ENCODE measurements at regions of chr4 and their contacts with region 1.

Region 1: DNA sequence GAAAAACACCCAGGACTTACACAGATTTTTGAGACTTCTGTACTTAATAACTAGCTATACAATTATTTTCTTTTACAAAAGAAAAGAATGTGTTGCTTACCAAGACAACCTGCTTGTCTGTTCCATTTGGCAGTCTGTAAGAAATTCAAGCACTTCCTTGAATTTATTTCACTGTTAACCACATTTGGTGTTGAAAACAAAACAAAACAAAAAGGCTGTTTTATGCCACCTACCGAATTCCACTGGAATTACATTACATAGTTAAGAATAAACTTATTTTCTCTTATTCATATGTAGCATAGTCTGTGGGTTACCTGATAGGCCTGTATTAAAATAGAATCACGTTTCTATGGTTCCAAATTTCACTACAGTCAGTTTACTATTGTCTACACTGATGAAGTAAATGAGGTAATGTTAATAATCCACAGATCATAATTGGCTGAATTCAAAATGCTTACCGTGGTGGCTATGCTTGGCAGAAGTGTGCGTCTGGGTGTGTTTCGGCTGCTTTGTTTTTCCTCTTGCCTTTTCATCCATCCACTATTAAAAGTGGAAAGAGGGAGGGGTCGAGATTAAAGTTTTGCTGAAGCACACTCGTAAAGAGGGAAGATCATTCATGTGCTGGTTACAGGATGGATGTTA is at the start of gene TLR1:
- DNase-seq: no peak
- ATAC-seq: peak; percentile 82
- H3K4me3 Mint-ChIP-seq: peak within 1 kb of the TSS; percentile 64
- H3K27ac Mint-ChIP-seq: peak within 1 kb of the TSS; percentile 88
- H3K4me1 Mint-ChIP-seq: peaks cover 19% of the 10 kb centered on the region
- H3K27me3 Mint-ChIP-seq: no peaks in the 10 kb centered on the region
- CTCF ChIP-seq: peak; percentile 77
- total RNA-seq, gene TLR1: 1.5 to 1.9 TPM

Region 2: DNA sequence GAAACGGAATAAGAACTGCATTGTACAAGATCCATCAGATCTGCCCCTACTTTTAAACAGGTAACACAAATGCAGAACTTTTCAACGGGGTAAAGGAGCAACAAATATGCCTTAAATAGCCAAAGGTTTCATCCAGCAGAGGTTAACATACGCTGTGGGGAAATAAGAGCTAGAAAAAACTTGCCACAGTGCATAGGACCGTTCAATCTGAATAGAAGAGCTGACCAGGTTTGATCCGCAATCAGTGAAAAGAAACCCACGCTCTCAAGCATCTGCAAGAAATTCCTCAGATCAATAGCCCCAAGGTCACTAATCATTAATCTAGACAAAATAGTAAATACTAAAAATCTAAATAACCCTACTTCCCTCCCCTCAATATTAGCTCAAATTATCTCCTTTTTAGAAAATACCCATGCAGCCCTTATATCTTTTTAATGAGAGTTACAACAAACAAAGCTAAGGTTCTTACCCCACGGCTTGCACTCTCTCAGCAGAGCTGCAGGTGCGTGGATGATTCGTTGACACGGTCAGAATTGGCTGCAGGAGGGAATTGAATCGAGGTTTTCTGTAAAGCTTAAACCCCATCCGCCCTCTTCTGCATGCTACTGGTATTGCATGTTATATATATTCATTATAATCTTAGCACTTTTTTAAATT is 22.2 kb before region 1 on chr4 and contains the start of gene TLR10:
- CTCF ChIA-PET with region 1: interaction called, 55 read pairs
- POLR2A ChIA-PET with region 1: no interaction called
- intact Hi-C with region 1: no loop called
- DNase-seq: peak; percentile 57
- ATAC-seq: peak; percentile 92
- H3K4me3 Mint-ChIP-seq: no peak within 1 kb of the TSS
- H3K27ac Mint-ChIP-seq: no peak within 1 kb of the TSS
- H3K4me1 Mint-ChIP-seq: peaks cover 4% of the 10 kb centered on the region
- H3K27me3 Mint-ChIP-seq: no peaks in the 10 kb centered on the region
- CTCF ChIP-seq: peak; percentile 76
- total RNA-seq, gene TLR10: 0.11 to 0.22 TPM

Region 3: GRCh38 chr4:38818441-38818976 is 13.7 kb after region 1 on chr4:
- CTCF ChIA-PET with region 1: interaction called, 10 read pairs
- POLR2A ChIA-PET with region 1: interaction called, 6 read pairs
- intact Hi-C with region 1: no loop called
- DNase-seq: no peak
- ATAC-seq: no peak
- H3K4me3 Mint-ChIP-seq: no peak overlapping the region
- H3K27ac Mint-ChIP-seq: no peak overlapping the region
- H3K4me1 Mint-ChIP-seq: peaks cover 13% of the 10 kb centered on the region
- H3K27me3 Mint-ChIP-seq: no peaks in the 10 kb centered on the region
- CTCF ChIP-seq: no peak